Esophagus squamous epithelium (tissue), 5 donors: ENCODE measurements at regions of chr9 and their contacts with region 1.

Region 1: GRCh38 chr9:93566408-93567270 is 9.7 kb upstream of the PHF2 start:
- DNase-seq: peak; percentile 86
- H3K4me3 ChIP-seq: peak overlapping the region; percentile 37 to 74 (median 54)
- H3K27ac ChIP-seq: peak overlapping the region; percentile 87 to 95 (median 91)
- H3K4me1 ChIP-seq: peaks cover 9 to 34% (median 10%) of the 10 kb centered on the region in 3 donors
- H3K27me3 ChIP-seq: no peaks in the 10 kb centered on the region
- CTCF ChIP-seq: peak; percentile 83 to 97 (median 92)
- POLR2A ChIP-seq: peak in 3 of 4 donors; percentile 76 to 93 (median 90)

Region 2: GRCh38 chr9:93453047-93453914 is 113.4 kb before region 1 on chr9 and contains the start of gene FAM120AOS:
- intact Hi-C with region 1: loop called (anchors 5 kb)
- DNase-seq: peak; percentile 61
- H3K4me3 ChIP-seq: peak within 1 kb of the TSS; percentile 72 to 93 (median 86)
- H3K27ac ChIP-seq: peak within 1 kb of the TSS; percentile 97 to 100 (median 98)
- H3K4me1 ChIP-seq: peaks cover 21 to 59% (median 32%) of the 10 kb centered on the region in 3 donors
- H3K27me3 ChIP-seq: no peaks in the 10 kb centered on the region
- CTCF ChIP-seq: no peak
- POLR2A ChIP-seq: peak in 3 of 4 donors; percentile 38 to 78 (median 63)
- total RNA-seq, gene FAM120AOS: 18.0 to 33.6 (median 24.4) TPM